Common myeloid progenitor, CD34-positive (primary cell): ENCODE measurements at regions of chr12 and their contacts with region 1.

Region 1: DNA sequence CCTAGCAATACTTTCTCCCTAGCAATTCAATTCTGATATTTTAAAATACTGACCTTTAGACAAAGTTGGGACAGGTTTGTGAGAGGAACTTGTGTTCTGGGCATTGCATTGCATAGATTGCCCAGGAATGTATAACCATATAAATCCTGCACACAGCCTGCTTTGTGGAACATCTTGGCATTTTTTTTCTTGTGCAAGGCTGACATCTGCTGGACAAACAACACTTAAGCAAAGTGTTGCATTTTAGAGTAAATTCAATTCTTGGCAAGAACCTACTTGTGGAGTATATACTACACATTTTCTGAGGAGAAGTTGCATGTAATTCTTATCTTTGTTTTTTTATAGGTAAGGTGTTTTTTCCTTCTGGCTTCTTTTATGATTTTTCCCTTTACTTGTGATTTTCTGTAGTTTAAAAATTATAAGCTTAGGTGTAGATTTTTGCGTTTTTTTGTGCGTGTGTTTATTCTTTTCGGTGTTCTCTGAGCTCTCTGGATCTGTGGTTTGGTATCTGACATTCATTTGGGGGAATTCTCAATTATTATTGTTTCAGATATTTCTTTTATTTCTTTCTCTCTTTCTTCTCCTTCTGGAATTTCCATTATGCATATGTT is 26.4 kb downstream of the TESPA1 start:
- DNase-seq: peak; percentile 79 to 84 (median 81)
- H3K4me3 ChIP-seq: no peak overlapping the region
- H3K27ac ChIP-seq: peak overlapping the region in 1 of 2 experiments; percentile 64
- H3K4me1 ChIP-seq: peaks cover 23 to 75% (median 37%) of the 10 kb centered on the region in 4 experiments
- H3K27me3 ChIP-seq: no peaks in the 10 kb centered on the region

Region 2: GRCh38 chr12:54723379-54724256 is 234.5 kb before region 1 on chr12:
- CTCF ChIA-PET with region 1: interaction called, 11 read pairs
- POLR2A ChIA-PET with region 1: no interaction called
- DNase-seq: peak; percentile 46 to 73 (median 65)
- H3K4me3 ChIP-seq: no peak overlapping the region
- H3K27ac ChIP-seq: no peak overlapping the region
- H3K4me1 ChIP-seq: no peaks in the 10 kb centered on the region
- H3K27me3 ChIP-seq: peaks cover 0 to 5% (median 0%) of the 10 kb centered on the region in 5 experiments

Region 3: DNA sequence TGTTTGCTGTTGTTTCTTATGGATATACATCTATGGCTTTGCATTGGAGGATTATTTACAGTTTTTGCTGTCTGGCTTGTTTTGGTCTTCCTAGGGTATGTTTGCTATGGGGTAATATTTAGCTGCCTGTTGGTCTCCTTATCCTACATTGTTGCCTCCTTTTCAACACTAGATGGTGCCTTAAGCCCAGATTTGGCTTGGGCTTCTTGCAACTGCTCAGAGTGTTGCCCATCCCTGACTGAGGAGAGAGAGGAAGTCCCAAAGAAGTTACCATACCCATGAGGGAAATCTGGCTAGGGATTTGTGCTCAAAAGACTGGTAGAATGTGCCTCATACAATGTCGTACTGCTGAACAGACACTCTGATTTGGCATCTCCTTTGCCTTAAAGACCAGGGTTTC is 198.4 kb before region 1 on chr12:
- CTCF ChIA-PET with region 1: interaction called, 13 read pairs
- POLR2A ChIA-PET with region 1: no interaction called
- DNase-seq: peak; percentile 47 to 64 (median 61)
- H3K4me3 ChIP-seq: no peak overlapping the region
- H3K27ac ChIP-seq: no peak overlapping the region
- H3K4me1 ChIP-seq: no peaks in the 10 kb centered on the region
- H3K27me3 ChIP-seq: no peaks in the 10 kb centered on the region

Region 4: GRCh38 chr12:54977155-54977554 is 19.0 kb after region 1 on chr12:
- CTCF ChIA-PET with region 1: interaction called, 14 read pairs
- POLR2A ChIA-PET with region 1: interaction called, 3 read pairs
- DNase-seq: no peak
- H3K4me3 ChIP-seq: peak overlapping the region in 3 of 7 experiments; percentile 24 to 65 (median 57)
- H3K27ac ChIP-seq: peak overlapping the region in 1 of 2 experiments; percentile 73
- H3K4me1 ChIP-seq: peaks cover 40 to 94% (median 64%) of the 10 kb centered on the region in 4 experiments
- H3K27me3 ChIP-seq: no peaks in the 10 kb centered on the region